Posterior cingulate gyrus (tissue), 11 donors: ENCODE measurements at regions of chr17 and their contacts with region 1.

Region 1: DNA sequence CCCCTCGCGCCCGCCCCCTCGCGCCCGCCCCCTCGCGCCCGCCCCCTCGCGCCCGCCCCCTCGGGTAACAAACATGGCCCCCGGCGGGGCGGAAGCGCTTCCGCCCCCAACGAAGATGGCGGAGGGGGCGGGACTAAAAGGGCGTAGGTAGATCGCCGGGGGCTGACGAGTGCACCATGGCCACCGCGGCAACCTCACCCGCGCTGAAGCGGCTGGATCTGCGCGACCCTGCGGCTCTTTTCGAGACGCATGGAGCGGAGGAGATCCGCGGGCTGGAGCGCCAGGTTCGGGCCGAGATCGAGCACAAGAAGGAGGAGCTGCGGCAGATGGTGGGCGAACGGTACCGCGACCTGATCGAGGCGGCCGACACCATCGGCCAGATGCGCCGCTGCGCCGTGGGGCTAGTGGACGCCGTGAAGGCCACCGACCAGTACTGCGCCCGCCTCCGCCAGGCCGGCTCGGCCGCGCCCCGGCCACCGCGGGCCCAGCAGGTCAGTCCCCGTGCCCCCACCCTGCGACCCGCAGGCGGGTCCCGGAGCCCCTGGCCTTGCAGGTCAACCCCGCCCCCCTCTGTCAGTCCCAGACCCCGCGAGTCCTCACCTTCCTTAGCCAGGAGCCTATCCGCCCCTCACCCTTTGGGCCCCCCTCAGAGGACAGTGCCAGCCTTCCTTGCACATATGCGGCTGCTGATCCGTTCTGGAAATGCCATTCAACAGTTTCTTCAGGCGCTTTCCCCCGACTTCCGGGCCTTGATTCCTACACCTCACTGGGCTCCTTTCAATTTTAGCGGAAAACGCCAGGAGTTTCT is at the start of gene COG1:
- DNase-seq: peak; percentile 63 to 93 (median 78)

Region 2: GRCh38 chr17:72556944-72557826 is 635.9 kb before region 1 on chr17:
- intact Hi-C with region 1: loop called (anchors 10 kb)
- DNase-seq: peak; percentile 45 to 96 (median 73)

Region 3: GRCh38 chr17:73092523-73093135 is 100.5 kb before region 1 on chr17 and contains the start of gene SLC39A11:
- intact Hi-C with region 1: loop called (anchors 5 kb)
- DNase-seq: peak; percentile 92 to 99 (median 94)

Region 4: GRCh38 chr17:73166731-73167581 is 26.1 kb before region 1 on chr17:
- intact Hi-C with region 1: no loop called
- DNase-seq: no peak

Region 5: DNA sequence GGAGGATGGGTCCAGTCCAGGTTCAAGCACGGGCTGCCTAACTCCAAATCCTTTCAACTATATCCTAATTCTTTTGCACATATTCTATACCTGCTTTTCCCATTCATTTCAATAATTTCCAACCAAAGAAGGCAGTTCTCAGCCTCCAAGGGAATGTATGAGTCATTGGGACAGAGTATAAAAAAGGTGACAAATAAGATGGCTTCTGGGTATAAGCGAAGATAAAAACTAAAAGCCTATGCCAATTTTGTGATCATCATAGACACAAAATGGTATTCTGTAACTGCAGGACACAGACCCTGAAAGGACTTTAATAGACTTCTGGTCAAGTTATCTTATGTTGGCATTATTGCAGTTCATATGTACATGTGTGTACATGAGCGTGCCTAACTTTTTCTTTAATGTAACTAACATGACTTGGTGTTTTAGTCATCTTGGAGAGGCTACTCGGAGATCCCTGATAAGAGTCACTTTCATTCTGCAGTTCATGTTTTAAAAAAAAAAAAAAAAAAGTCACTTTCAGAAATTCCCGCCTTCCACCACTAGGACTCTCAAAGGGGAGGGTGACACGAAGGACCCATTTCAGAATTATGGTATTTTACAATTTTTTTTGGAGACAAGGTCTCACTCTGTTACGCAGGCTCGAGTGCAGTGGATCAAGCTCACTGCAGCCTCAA is 17.0 kb after region 1 on chr17:
- intact Hi-C with region 1: no loop called
- DNase-seq: no peak

Region 6: DNA sequence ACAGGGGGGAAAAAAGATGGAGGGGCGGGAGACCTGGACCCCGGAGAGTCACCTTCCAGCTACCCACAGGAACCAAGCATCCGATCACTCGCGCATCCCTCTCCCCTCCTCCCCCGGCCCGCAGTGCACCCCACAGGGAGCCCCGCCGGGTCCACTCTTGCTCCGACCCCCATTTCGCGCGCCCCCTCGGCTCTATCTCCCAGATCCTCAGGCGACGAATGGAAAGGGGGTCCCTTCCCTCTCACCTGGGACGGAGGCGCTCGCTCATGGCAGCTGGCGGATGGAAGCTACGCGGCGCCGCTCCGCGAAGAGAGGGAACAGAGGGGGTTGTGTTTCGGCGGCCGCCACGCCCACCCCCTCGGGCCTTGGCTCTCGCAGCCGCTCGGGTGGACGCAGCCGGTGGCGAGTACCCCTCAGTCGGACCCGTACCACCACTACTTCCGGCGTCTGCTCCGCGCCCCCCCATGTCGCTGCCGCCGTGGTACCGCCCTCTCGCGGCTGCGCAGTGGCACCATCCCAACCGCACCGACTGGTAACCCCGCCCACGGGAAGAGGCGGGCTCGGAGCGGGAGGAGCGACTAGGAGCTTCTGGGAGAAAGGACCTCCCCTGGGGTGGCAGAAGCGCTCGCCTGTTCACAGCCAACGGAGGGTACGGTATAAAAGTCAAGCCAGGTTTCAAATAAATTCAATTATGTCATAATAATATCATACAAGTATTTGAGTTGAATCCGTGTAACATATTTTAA is 38.9 kb after region 1 on chr17:
- intact Hi-C with region 1: loop called (anchors 2 kb)
- DNase-seq: peak; percentile 94 to 100 (median 98)

Region 7: GRCh38 chr17:73371285-73371684 is 178.2 kb after region 1 on chr17:
- intact Hi-C with region 1: loop called (anchors 5 kb)
- DNase-seq: no peak